PC-3 (cell line): ENCODE measurements at regions of chr22 and their contacts with region 1.

Region 1: GRCh38 chr22:36577019-36577418 is 48.1 kb upstream of the EIF3D start:
- DNase-seq: peak; percentile 90
- ATAC-seq: peak; percentile 90
- H3K4me3 ChIP-seq: no peak overlapping the region
- H3K27ac ChIP-seq: peak overlapping the region; percentile 29
- H3K4me1 ChIP-seq: peaks cover 14% of the 10 kb centered on the region
- H3K27me3 ChIP-seq: no peaks in the 10 kb centered on the region
- CTCF ChIP-seq: no peak

Region 2: GRCh38 chr22:36595940-36596339 is 18.9 kb after region 1 on chr22:
- CTCF ChIA-PET with region 1: no interaction called
- POLR2A ChIA-PET with region 1: no interaction called
- intact Hi-C with region 1: no loop called
- DNase-seq: no peak
- ATAC-seq: no peak
- H3K4me3 ChIP-seq: no peak overlapping the region
- H3K27ac ChIP-seq: no peak overlapping the region
- H3K4me1 ChIP-seq: no peaks in the 10 kb centered on the region
- H3K27me3 ChIP-seq: 0 out of 2 replicates have a peak, but pooled peaks cover 4% of the 10 kb centered on the region
- CTCF ChIP-seq: no peak

Region 3: DNA sequence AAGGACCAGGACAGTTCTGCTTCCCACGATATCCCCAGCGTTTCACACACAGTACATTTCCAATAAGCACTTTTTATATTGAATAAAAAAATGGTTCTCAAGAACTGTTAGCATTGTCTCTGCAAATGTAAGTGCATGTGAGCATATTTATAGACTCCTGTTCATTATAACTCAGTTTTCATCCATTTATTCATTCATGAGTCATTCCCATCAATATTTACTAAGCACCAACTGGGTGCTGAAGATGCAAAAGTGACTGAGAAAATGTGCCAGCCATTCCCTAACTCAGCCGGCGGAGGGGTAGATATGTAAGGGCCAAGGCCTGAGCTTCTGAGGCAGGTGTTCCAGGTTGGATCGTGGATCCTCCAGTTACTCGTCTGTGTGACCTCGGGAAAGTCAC is 61.7 kb after region 1 on chr22:
- CTCF ChIA-PET with region 1: no interaction called
- POLR2A ChIA-PET with region 1: no interaction called
- intact Hi-C with region 1: loop called (anchors 2 kb)
- DNase-seq: peak; percentile 46
- ATAC-seq: peak; percentile 51
- H3K4me3 ChIP-seq: no peak overlapping the region
- H3K27ac ChIP-seq: no peak overlapping the region
- H3K4me1 ChIP-seq: peaks cover 26% of the 10 kb centered on the region
- H3K27me3 ChIP-seq: peaks cover 33% of the 10 kb centered on the region
- CTCF ChIP-seq: no peak

Region 4: DNA sequence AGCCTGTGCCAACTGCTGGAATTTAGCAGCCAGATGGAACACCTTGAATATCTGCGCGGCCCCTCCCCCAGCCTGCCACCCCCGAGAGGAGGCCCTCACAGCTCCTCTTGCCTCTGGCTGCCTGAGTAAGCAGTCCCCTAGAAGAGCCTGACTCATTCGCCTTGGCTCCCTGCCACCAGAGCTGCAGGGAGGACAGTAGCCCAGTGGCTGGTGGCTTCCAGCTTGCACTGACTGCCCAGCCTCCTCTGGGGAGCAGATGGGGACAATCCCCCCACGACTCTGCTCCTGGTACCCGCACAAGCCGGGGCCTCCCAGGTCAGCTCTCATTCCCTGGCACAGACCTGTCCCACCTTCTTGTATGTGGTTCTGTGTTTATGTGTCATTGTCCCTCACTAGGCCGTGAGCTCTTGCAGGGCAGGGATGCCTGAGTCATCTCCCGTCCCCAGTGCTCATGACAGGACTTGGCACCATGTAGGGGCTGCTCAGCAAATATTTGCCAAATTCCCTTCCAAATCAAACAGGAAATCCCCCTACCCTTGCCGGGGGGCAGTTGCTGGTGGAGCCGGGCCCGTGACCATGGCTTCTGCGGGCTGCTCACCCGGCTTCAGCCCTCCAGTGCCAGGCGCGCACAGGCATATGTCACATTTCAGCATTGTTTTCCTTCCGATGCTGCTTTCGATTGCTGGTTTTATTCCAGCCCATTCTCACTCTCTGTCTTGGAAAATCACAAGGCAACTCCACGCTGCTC is 82.9 kb after region 1 on chr22:
- CTCF ChIA-PET with region 1: no interaction called
- POLR2A ChIA-PET with region 1: no interaction called
- intact Hi-C with region 1: loop called (anchors 2 kb)
- DNase-seq: peak; percentile 98
- ATAC-seq: peak; percentile 79
- H3K4me3 ChIP-seq: peak overlapping the region; percentile 61
- H3K27ac ChIP-seq: peak overlapping the region; percentile 97
- H3K4me1 ChIP-seq: peaks cover 30% of the 10 kb centered on the region
- H3K27me3 ChIP-seq: no peaks in the 10 kb centered on the region
- CTCF ChIP-seq: no peak